Ascending aorta (tissue), 2 donors: ENCODE measurements at regions of chr6 and their contacts with region 1.

Region 1: GRCh38 chr6:44431118-44431725 is 43.7 kb downstream of the CDC5L start:
- DNase-seq: no peak
- H3K4me3 ChIP-seq: peak overlapping the region in 1 of 2 donors; percentile 31
- H3K27ac ChIP-seq: peak overlapping the region; percentile 28 to 72
- H3K4me1 ChIP-seq: peaks cover 3 to 33% of the 10 kb centered on the region in 2 donors
- H3K27me3 ChIP-seq: no peaks in the 10 kb centered on the region
- CTCF ChIP-seq: peak; percentile 54 to 71 (median 65)

Region 2: DNA sequence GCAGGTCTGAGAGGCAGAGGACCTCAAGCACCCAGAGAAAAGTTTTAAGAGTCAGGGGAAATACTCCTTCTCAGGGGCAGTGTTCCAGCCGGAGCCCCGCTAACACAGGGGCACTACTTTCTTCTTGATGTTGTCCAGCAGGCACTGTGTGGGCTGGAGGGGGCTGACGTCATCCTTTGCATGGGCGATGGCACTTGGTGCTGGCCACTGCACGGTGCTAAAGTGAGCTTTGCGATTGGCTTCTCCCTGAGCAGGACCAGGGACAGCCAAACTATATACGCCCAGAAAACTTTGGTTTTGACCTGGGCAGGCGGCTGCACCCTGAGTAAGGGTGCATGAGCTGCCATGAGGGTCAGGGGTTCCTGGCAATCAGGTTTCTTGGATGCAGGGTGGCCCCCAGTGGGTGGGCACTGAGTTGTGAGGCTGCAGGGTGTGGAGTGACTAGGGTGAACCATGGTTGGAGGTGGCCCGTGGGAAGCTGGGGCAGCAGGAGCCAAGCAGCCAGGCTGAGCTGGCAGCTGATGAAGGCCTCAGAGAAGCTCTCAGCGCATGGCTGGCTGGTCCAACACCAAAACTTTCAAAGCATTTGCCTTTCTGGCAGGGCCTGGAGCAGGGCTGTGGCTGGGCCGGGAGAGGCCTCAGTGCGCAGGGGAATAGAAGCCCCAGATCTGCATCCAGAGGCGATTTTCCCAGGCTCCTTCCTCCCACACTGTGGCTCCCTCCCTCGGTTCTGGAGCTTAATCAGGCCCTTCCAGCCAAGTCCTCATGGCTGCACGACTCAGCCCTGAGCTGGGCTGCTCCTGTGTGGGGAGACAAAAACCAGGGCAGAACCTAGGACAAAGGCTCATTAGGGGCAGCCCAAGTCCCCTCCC is 761.9 kb before region 1 on chr6:
- intact Hi-C with region 1: no loop called
- DNase-seq: peak in 1 of 2 donors; percentile 82
- H3K4me3 ChIP-seq: no peak overlapping the region
- H3K27ac ChIP-seq: peak overlapping the region; percentile 62 to 79
- H3K4me1 ChIP-seq: peaks cover 27 to 32% of the 10 kb centered on the region in 2 donors
- H3K27me3 ChIP-seq: no peaks in the 10 kb centered on the region
- CTCF ChIP-seq: no peak

Region 3: GRCh38 chr6:44456070-44456965 is 25.1 kb after region 1 on chr6:
- intact Hi-C with region 1: loop called (anchors 1 kb)
- DNase-seq: no peak
- H3K4me3 ChIP-seq: peak overlapping the region; percentile 29 to 37
- H3K27ac ChIP-seq: peak overlapping the region in 1 of 2 donors; percentile 5
- H3K4me1 ChIP-seq: peaks cover 0 to 4% of the 10 kb centered on the region in 2 donors
- H3K27me3 ChIP-seq: no peaks in the 10 kb centered on the region
- CTCF ChIP-seq: peak; percentile 68 to 90 (median 87)